Activated B cell treated with CpG ODN at 0.5 μM for 24 hours (primary cell): ENCODE measurements at regions of chr7 and their contacts with region 1.

Region 1: DNA sequence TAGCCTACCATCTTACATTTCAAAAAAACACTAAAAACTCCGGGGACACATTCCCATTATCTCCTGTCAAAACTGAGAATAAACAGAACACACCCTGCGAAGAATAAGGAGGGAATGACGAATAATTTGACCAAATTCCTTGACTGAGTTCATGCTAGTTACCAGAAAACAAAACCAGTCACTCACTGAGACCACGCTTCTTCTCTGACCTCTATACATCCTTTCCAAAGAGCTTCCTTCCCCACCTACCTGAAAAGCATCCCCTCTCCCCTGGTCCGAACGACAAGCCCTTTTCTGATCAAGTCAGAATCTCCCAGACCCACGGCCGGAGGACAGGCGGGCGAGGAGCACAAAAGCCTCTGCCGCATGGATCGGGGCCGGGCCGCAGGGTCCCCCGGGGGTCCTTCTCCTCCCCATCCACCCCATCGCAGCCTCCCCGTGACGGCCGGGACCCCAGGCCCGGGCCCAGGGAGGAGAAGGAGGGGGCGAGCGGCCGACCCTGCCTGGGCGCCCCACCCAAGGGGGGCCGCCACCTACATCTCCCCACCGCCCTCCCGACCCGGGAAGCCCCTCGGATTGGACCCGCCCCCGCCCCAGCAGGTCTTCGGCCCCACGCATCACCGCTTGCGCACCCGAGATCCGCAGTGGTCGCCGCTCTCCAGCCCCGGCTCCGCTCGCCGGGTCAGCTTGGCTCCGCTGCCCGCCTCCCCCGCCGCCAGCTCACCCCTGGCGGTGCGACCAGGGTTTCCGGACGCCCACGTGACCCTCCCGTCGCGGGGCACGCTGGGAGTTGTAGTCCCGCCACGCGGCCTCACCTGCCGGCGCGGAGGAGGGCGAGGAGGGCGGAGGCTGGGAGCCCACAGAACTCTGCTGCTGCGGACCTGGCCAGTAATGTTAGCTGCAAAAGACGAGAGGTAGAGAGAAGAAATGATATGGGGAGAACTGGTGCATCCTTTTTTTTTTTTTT is at the start of gene SLC37A3:
- DNase-seq: peak; percentile 85
- ATAC-seq: peak; percentile 96
- H3K4me3 Mint-ChIP-seq: peak within 1 kb of the TSS; percentile 88
- H3K27ac Mint-ChIP-seq: peak within 1 kb of the TSS; percentile 65
- H3K4me1 Mint-ChIP-seq: peaks cover 8% of the 10 kb centered on the region
- H3K27me3 Mint-ChIP-seq: peaks cover 1% of the 10 kb centered on the region
- CTCF ChIP-seq: no peak
- total RNA-seq, gene SLC37A3: 10.6 and 12.4 TPM in 2 replicates

Region 2: DNA sequence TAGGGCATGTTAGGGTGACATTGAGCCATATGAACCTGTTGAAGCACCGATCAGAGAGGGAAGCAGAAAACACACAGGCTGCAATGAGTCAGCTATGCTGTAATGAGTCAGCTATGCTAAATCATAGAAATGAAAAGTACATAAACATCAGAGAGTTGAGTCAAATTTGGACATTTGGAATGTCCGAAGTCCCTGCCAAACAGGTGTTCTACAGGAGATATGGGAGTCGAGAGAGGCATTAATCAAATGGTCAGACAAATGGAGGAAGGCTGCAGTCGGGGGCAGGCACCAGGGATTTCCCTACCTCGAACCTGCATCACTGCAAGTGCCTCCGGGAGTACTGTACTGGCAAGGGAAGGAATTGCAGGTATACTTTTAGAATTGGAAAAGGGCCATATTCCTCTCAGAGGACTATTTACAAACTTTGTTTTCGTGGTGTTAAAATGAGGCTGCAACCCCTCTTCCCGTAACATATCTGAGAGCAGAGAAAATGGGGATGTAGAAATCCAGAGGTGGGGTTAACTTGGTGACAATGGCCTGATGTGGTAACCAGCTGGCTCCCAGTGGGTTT is 1279.7 kb before region 1 on chr7:
- CTCF ChIA-PET with region 1: no interaction called
- POLR2A ChIA-PET with region 1: no interaction called
- intact Hi-C with region 1: loop called (anchors 5 kb)
- DNase-seq: no peak
- ATAC-seq: peak; percentile 23
- H3K4me3 Mint-ChIP-seq: peak overlapping the region; percentile 68
- H3K27ac Mint-ChIP-seq: peak overlapping the region; percentile 91
- H3K4me1 Mint-ChIP-seq: peaks cover 31% of the 10 kb centered on the region
- H3K27me3 Mint-ChIP-seq: no peaks in the 10 kb centered on the region
- CTCF ChIP-seq: no peak

Region 3: DNA sequence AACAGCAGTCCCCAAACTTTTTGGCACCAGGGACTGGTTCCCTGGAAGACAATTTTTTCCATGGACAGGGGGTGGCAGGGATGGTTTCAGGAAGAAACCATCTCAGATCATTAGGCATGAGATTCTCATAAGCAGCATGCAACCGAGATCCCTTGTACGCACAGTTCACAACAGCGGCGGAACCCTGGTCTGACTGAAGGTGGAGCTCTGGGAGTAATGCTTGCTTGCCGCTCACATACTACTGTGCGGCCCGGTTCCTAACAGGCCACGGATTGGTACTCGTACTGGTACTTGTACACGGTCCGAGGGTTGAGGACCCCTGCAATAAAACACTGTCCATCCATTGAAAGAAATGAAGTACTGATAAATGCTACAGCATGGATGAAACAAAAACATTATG is 48.4 kb after region 1 on chr7:
- CTCF ChIA-PET with region 1: no interaction called
- POLR2A ChIA-PET with region 1: interaction called, 3 read pairs
- intact Hi-C with region 1: loop called (anchors 10 kb)
- DNase-seq: no peak
- ATAC-seq: no peak
- H3K4me3 Mint-ChIP-seq: no peak overlapping the region
- H3K27ac Mint-ChIP-seq: no peak overlapping the region
- H3K4me1 Mint-ChIP-seq: peaks cover 21% of the 10 kb centered on the region
- H3K27me3 Mint-ChIP-seq: no peaks in the 10 kb centered on the region
- CTCF ChIP-seq: no peak

Region 4: DNA sequence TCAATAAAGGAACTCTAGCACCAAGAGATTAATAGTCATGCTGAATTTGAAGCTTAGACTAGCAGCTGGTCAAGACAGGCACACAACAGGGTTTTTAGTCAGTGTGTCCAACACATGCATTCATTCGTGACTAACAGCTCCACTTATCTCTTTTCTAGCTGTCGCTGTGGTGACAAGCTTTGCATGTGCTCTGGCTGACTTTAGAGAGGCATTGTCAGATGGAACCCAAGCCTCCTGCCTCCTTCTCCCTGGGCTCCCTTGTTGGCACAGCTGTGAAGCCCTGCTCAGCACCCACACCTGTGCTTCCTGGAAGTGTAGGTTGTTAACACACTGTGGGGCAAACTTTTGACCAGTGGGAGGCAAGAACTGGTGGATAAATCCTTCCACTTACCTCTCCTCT is 1143.3 kb after region 1 on chr7:
- CTCF ChIA-PET with region 1: no interaction called
- POLR2A ChIA-PET with region 1: interaction called, 10 read pairs
- intact Hi-C with region 1: no loop called
- DNase-seq: no peak
- ATAC-seq: no peak
- H3K4me3 Mint-ChIP-seq: no peak overlapping the region
- H3K27ac Mint-ChIP-seq: no peak overlapping the region
- H3K4me1 Mint-ChIP-seq: no peaks in the 10 kb centered on the region
- H3K27me3 Mint-ChIP-seq: peaks cover 2% of the 10 kb centered on the region
- CTCF ChIP-seq: no peak